ENCODE measurements at regions of chr3 and their contacts with region 1.

Region 1: DNA sequence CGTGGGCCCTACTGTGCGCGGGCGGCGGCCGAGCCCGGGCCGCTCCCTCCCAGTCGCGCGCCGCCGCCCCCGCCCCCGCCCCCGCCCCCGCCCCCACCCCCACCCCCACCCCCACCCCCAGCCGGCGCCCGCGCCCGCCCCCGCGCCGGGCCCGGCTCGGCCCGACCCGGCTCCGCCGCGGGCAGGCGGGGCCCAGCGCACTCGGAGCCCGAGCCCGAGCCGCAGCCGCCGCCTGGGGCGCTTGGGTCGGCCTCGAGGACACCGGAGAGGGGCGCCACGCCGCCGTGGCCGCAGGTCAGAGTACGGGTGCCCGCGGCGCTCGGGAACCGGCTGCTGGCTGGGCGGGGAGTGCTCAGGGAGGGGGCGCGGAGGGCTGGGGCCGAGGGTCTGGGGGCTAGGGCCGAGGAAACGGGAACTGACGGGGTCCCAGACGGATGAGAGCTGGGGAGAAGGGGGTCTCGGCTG is 1.1 kb upstream of the PPARG start:
- DNase-seq: peak; percentile 63
- ATAC-seq: peak; percentile 57
- H3K4me3 ChIP-seq: peak overlapping the region; percentile 74
- H3K27ac ChIP-seq: peak overlapping the region; percentile 78
- H3K4me1 ChIP-seq: peaks cover 18% of the 10 kb centered on the region
- H3K27me3 ChIP-seq: no peaks in the 10 kb centered on the region
- CTCF ChIP-seq: no peak

Region 2: DNA sequence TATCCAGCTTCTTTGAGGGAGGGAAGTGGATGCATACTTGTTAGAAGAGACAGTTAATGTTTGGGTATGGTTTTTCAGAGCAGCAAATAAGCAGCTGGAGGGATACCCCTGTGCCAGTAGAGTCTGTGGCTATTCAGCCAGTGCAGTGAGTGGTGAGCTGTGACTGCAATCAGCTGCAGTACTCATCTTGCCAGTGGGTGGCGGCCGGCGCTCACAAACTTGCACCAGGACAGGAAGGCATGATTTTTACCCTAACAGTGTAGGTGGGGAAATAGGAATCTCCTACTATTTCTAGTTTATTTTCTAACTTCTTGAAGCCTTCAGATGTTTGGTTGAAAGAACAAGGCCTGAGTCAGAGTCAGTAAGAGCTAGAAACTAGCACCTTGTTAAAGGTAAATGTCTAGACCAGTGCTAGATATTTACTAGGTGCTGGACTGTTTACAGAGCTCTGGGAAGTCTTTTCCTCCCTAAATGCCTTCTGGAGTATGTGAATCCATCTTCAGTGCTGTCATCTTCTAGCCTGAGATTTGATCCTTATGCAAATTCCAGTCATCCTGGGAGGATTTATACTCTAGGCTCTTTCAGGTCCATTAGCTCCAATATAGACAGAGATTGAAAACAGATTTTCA is 152.6 kb before region 1 on chr3:
- CTCF ChIA-PET with region 1: interaction called, 4 read pairs
- POLR2A ChIA-PET with region 1: no interaction called
- intact Hi-C with region 1: loop called (anchors 2 kb)
- DNase-seq: peak; percentile 83
- ATAC-seq: peak; percentile 90
- H3K4me3 ChIP-seq: no peak overlapping the region
- H3K27ac ChIP-seq: no peak overlapping the region
- H3K4me1 ChIP-seq: peaks cover 15% of the 10 kb centered on the region
- H3K27me3 ChIP-seq: no peaks in the 10 kb centered on the region
- CTCF ChIP-seq: peak; percentile 99

Region 3: GRCh38 chr3:12224181-12225147 is 63.3 kb before region 1 on chr3:
- CTCF ChIA-PET with region 1: no interaction called
- POLR2A ChIA-PET with region 1: interaction called, 11 read pairs
- intact Hi-C with region 1: loop called (anchors 1 kb)
- DNase-seq: peak; percentile 82
- ATAC-seq: peak; percentile 70
- H3K4me3 ChIP-seq: no peak overlapping the region
- H3K27ac ChIP-seq: peak overlapping the region; percentile 40
- H3K4me1 ChIP-seq: peaks cover 63% of the 10 kb centered on the region
- H3K27me3 ChIP-seq: no peaks in the 10 kb centered on the region
- CTCF ChIP-seq: no peak

Region 4: DNA sequence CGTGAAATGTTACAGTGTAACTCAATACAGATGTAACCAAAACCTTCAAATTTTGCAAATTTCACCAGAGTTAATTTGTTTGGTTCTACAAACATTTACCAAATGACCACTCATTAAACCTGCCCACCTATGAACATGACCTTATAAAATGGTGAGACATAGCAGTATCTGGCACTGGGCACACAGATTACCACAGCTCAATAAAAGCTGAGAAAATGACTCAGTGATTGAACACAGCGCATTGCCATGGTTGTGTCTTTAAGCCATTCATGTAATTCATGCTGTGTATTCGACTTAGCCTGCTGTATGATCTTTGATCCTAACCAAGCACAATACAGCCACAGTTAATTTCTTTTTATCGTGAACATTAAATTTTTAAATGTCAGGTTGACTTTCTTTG is 12.4 kb after region 1 on chr3:
- CTCF ChIA-PET with region 1: no interaction called
- POLR2A ChIA-PET with region 1: no interaction called
- intact Hi-C with region 1: loop called (anchors 1 kb)
- DNase-seq: peak; percentile 94
- ATAC-seq: peak; percentile 79
- H3K4me3 ChIP-seq: peak overlapping the region; percentile 17
- H3K27ac ChIP-seq: peak overlapping the region; percentile 85
- H3K4me1 ChIP-seq: peaks cover 80% of the 10 kb centered on the region
- H3K27me3 ChIP-seq: no peaks in the 10 kb centered on the region
- CTCF ChIP-seq: no peak

Region 5: GRCh38 chr3:12423918-12424630 is 136.3 kb after region 1 on chr3:
- CTCF ChIA-PET with region 1: no interaction called
- POLR2A ChIA-PET with region 1: no interaction called
- intact Hi-C with region 1: no loop called
- DNase-seq: peak; percentile 68
- ATAC-seq: peak; percentile 62
- H3K4me3 ChIP-seq: no peak overlapping the region
- H3K27ac ChIP-seq: peak overlapping the region; percentile 91
- H3K4me1 ChIP-seq: peaks cover 51% of the 10 kb centered on the region
- H3K27me3 ChIP-seq: no peaks in the 10 kb centered on the region
- CTCF ChIP-seq: no peak

Region 6: GRCh38 chr3:12484198-12484974 is 196.6 kb after region 1 on chr3 and contains the start of gene TSEN2:
- CTCF ChIA-PET with region 1: interaction called, 3 read pairs
- POLR2A ChIA-PET with region 1: no interaction called
- intact Hi-C with region 1: loop called (anchors 2 kb)
- DNase-seq: peak; percentile 98
- ATAC-seq: peak; percentile 80
- H3K4me3 ChIP-seq: peak within 1 kb of the TSS; percentile 81
- H3K27ac ChIP-seq: peak within 1 kb of the TSS; percentile 81
- H3K4me1 ChIP-seq: peaks cover 57% of the 10 kb centered on the region
- H3K27me3 ChIP-seq: no peaks in the 10 kb centered on the region
- CTCF ChIP-seq: no peak
- total RNA-seq, gene TSEN2: 40.2 and 51.0 TPM in 2 replicates